Naive thymus-derived CD8-positive, alpha-beta T cell (primary cell): ENCODE measurements at regions of chr4 and their contacts with region 1.

Region 1: GRCh38 chr4:55546756-55547465 is at the start of gene CLOCK:
- DNase-seq: peak; percentile 73 to 91 (median 82)
- ATAC-seq: peak; percentile 72 to 73
- H3K4me3 Mint-ChIP-seq: peak within 1 kb of the TSS; percentile 84 to 96 (median 93)
- H3K27ac Mint-ChIP-seq: peak within 1 kb of the TSS; percentile 89 to 97 (median 92)
- H3K4me1 Mint-ChIP-seq: peaks cover 11 to 46% (median 39%) of the 10 kb centered on the region in 4 donors
- H3K27me3 Mint-ChIP-seq: peaks cover 0 to 3% (median 0%) of the 10 kb centered on the region in 5 donors
- polyA plus RNA-seq, gene CLOCK: 4.8 to 5.2 (median 5.1) TPM

Region 2: GRCh38 chr4:55157559-55158277 is 389.2 kb before region 1 on chr4:
- POLR2A ChIA-PET with region 1: no interaction called
- DNase-seq: no peak
- ATAC-seq: no peak
- H3K4me3 Mint-ChIP-seq: peak overlapping the region in 2 of 10 donors; percentile 3 to 20
- H3K27ac Mint-ChIP-seq: peak overlapping the region in 1 of 10 donors; percentile 18
- H3K4me1 Mint-ChIP-seq: peaks cover 0 to 5% (median 2%) of the 10 kb centered on the region in 4 donors
- H3K27me3 Mint-ChIP-seq: peaks cover 8 to 59% (median 35%) of the 10 kb centered on the region in 5 donors

Region 3: DNA sequence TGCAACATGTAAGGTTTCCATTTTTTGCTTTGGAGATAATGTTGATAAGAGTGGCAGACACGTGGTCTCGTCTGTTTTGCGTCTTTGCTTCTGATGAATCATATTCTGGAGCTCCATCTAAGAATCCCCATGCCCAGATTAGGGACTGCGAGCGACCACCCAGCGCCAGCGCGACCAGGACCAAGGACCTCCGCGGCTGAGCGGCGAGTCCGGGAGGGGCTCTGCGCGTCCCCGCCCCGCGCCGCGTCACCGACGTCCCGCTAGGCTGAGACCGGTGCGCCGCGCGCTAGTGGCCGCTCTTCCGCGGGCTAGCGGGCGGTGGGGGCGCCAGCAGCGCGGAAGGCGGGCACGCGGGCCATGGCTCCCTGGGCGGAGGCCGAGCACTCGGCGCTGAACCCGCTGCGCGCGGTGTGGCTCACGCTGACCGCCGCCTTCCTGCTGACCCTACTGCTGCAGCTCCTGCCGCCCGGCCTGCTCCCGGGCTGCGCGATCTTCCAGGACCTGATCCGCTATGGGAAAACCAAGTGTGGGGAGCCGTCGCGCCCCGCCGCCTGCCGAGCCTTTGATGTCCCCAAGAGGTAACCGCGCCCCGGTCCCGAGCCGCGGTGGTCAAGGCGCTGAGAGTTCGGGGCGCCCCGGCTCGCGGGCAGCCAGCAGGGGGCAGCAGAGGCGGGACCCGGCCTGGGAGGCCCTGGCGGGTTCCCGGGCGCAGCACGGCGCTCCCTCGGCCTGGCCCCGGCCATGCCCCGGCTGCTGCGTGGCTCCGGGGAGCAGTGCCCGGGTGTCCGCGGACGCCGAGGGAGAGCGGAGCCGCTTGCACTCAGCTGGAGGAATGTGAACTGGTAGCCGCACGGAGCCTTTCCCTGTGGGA is 200.7 kb before region 1 on chr4 and contains the start of gene SRD5A3:
- POLR2A ChIA-PET with region 1: interaction called, 10 read pairs
- DNase-seq: peak; percentile 52 to 84 (median 78)
- ATAC-seq: peak; percentile 88 to 91
- H3K4me3 Mint-ChIP-seq: peak within 1 kb of the TSS; percentile 81 to 94 (median 89)
- H3K27ac Mint-ChIP-seq: peak within 1 kb of the TSS; percentile 15 to 92 (median 90)
- H3K4me1 Mint-ChIP-seq: peaks cover 1 to 18% (median 11%) of the 10 kb centered on the region in 4 donors
- H3K27me3 Mint-ChIP-seq: no peaks in the 10 kb centered on the region
- polyA plus RNA-seq, gene SRD5A3: 7.5 to 14.8 (median 12.8) TPM

Region 4: GRCh38 chr4:55395529-55396307 is 151.2 kb before region 1 on chr4 and contains the start of gene TMEM165:
- POLR2A ChIA-PET with region 1: interaction called, 16 read pairs
- DNase-seq: peak; percentile 81 to 92 (median 86)
- ATAC-seq: peak; percentile 93 to 94
- H3K4me3 Mint-ChIP-seq: peak within 1 kb of the TSS; percentile 93 to 100 (median 98)
- H3K27ac Mint-ChIP-seq: peak within 1 kb of the TSS; percentile 95 to 100 (median 98)
- H3K4me1 Mint-ChIP-seq: peaks cover 20 to 44% (median 40%) of the 10 kb centered on the region in 4 donors
- H3K27me3 Mint-ChIP-seq: no peaks in the 10 kb centered on the region
- polyA plus RNA-seq, gene TMEM165: 16.0 to 32.7 (median 25.9) TPM

Region 5: GRCh38 chr4:55561889-55562288 is 15.0 kb after region 1 on chr4:
- POLR2A ChIA-PET with region 1: no interaction called
- DNase-seq: no peak
- ATAC-seq: no peak
- H3K4me3 Mint-ChIP-seq: no peak overlapping the region
- H3K27ac Mint-ChIP-seq: no peak overlapping the region
- H3K4me1 Mint-ChIP-seq: peaks cover 0 to 10% (median 0%) of the 10 kb centered on the region in 4 donors
- H3K27me3 Mint-ChIP-seq: peaks cover 0 to 9% (median 7%) of the 10 kb centered on the region in 5 donors

Region 6: DNA sequence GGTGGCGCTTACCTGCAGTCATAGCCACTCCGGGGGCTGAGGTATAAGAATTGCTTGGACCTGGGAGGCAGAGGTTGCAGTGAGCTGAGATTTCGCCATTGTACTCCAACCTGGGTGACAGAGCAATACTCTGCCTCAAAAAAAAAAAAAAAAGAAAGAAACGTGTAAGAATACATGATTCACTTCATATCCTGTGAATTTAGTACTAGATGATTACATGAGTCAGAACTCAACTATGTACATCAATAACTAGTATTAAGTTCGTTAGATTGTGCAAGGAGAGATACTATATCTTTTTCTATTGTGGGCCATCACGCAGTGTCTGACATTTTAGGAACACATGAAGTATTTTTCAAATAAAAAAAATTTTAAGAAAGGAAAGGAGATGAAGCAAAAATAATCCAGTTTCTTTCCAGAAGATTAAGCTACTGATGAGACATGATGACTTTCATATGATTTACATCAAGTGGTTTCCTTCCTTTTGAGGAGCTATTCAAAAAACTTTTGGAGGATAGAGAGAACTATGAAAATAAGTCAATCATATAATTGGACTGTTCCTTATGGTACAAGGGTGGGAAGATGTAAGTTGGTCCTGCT is 207.9 kb after region 1 on chr4:
- POLR2A ChIA-PET with region 1: no interaction called
- DNase-seq: no peak
- ATAC-seq: no peak
- H3K4me3 Mint-ChIP-seq: no peak overlapping the region
- H3K27ac Mint-ChIP-seq: no peak overlapping the region
- H3K4me1 Mint-ChIP-seq: no peaks in the 10 kb centered on the region
- H3K27me3 Mint-ChIP-seq: peaks cover 0 to 3% (median 0%) of the 10 kb centered on the region in 5 donors